Gastrocnemius medialis (tissue), 4 donors: ENCODE measurements at regions of chr20 and their contacts with region 1.

Region 1: DNA sequence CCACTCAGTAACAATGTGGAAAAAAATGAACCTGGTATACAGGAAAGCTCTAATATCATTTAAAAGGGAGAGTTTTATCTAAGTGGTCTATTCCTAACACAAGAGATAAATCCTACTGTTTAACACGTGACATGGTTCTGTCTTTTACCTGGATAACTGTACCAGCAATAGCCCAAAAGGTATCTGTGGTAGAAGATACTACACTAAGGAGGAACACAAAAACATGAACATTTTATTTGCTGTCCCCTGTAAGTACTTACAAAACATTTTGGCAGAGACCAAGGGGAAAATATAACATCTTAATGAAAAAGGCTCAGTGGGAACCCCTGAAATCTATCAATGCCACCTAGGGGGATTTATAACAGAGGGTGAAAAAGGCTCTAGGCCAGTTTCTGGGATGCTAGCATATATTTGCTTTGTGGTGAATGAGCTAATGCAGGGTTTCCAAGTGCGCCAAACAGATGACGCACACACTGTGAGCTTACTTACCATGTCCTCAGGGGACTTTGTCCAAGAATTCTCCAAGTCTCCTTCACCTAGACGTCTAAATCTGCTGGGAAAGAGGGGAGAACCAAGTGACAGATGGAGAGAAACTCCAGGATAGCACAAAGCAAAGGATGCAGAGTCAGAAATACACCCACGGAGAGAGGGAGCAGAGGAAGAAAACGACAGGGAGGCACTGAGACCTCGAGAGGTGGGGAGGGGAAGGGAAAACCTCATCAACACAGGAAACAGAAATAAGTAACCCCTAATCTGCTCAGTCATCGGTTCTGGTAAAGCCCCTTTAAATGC is 147.9 kb upstream of the PRND start:
- DNase-seq: no peak
- ATAC-seq: no peak
- H3K4me3 ChIP-seq: no peak overlapping the region
- H3K27ac ChIP-seq: no peak overlapping the region
- H3K4me1 ChIP-seq: no peaks in the 10 kb centered on the region
- H3K27me3 ChIP-seq: peaks cover 0 to 4% (median 0%) of the 10 kb centered on the region in 3 donors
- CTCF ChIP-seq: no peak
- POLR2A ChIP-seq: no peak

Region 2: DNA sequence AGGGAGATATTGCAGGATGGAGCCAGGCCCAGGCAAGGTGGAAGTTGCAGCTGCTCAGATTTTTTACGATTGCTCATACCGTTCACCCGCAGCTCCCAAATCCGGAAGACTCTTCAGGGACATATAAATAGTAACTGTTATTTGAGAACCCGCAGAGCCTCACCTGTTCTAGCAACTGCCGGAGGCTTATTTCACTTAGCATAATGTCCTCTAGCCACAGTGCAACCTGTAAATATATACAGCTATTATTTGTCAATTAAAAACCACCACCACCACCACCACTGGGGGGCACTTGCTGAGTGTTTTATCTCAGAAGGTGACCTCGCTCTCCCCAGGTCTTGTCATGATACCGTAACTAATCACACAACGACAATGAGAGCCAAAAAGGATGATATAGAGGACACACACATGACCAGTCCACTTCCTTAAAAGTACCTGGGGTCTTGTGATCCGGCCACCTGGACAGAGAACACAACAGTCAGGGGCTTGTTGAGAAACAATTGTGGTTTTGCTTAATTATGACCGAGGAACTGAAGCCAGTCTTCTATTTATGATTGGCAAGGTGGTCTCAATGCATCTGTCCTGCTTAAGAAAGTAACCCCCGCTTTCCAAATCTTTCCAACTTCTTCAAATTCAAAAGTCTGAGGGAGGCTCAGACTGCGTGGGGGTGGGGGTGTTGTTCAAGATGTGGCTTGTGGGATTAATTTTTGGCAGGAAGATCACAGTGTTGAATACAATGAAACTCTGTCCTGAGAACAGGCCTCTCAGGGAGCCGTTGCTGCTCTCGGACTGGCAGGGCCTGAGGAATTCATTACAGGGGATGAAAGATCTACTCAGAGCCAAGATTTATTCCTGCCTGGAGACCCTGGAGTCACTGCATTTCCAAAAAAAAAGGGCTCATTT is 40.2 kb after region 1 on chr20:
- in situ Hi-C with region 1: no loop called
- intact Hi-C with region 1: no loop called
- DNase-seq: peak; percentile 24 to 60
- ATAC-seq: peak; percentile 93 to 97
- H3K4me3 ChIP-seq: no peak overlapping the region
- H3K27ac ChIP-seq: peak overlapping the region; percentile 32 to 72 (median 58)
- H3K4me1 ChIP-seq: peaks cover 6 to 10% of the 10 kb centered on the region in 2 donors
- H3K27me3 ChIP-seq: no peaks in the 10 kb centered on the region
- CTCF ChIP-seq: peak in 3 of 5 experiments; percentile 8 to 36 (median 26)
- POLR2A ChIP-seq: no peak

Region 3: DNA sequence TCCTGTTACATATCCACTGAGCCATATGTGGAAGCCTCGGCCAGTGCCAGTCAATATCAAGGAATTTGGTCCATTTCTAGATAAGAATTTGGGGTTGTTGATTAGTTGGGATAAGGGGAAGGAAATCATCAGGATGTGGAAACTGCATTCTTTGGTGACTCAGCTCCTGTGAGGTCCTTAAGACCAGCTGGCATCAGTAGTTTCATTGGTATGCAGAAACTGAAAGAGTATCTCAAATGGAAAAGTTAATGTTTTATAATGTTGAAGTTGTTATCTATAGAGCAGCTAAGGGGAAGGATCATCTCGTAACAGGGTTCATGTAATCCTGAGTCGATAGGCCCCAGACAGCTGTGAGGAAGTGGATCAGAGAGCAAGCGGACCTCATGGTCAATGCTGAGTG is 60.0 kb after region 1 on chr20:
- in situ Hi-C with region 1: no loop called
- intact Hi-C with region 1: loop called (anchors 10 kb)
- DNase-seq: no peak
- ATAC-seq: no peak
- H3K4me3 ChIP-seq: no peak overlapping the region
- H3K27ac ChIP-seq: no peak overlapping the region
- H3K4me1 ChIP-seq: no peaks in the 10 kb centered on the region
- H3K27me3 ChIP-seq: no peaks in the 10 kb centered on the region
- CTCF ChIP-seq: no peak
- POLR2A ChIP-seq: no peak

Region 4: DNA sequence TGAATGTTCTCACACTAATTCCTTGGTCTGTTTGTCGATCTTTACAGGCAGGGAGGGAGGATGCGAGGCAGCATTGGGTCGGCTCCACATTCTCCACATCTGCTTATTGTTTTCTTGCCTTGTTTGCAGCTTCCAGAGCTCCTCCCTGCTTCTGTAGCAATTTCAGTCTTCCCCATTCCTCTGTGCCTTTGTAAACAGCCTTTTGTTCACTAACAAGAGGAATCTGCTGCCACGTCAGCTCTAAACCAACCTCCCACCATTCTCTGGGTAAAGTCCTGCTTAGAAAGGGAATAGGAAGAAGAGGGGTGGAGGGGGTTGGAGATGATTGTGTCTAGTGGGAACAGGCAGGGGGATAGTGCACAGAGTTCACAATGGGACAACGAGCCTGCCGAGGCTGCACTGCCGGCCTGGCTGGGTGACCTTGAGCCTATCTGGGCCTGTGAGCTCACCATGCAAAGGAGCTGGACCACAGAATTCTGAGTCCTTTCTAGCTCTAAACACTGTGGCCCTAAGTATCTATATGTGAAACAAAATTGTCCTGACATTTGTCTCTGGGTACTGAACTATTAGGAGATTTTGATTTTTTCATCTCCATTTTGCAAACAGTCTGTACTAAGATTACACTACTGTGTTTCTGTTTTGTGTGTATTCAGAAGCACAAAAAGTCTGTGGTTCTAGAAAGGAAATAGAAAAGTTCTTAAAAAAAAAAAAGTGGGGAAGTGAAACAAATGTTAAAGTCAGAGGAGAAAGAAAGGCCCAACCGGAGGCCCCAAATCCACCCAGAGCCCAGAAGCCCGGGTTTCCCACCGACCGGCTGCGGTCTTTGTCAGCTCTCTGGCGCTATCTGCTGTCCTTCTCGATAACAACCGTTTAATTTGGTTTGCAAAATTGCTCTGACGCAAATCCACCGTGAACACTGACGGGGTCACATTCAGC is 146.5 kb after region 1 on chr20:
- in situ Hi-C with region 1: no loop called
- intact Hi-C with region 1: no loop called
- DNase-seq: peak; percentile 45 to 61
- ATAC-seq: peak; percentile 79 to 85
- H3K4me3 ChIP-seq: peak overlapping the region in 1 of 4 donors; percentile 3
- H3K27ac ChIP-seq: peak overlapping the region in 1 of 4 donors; percentile 6
- H3K4me1 ChIP-seq: peaks cover 0 to 7% of the 10 kb centered on the region in 2 donors
- H3K27me3 ChIP-seq: no peaks in the 10 kb centered on the region
- CTCF ChIP-seq: peak; percentile 68 to 77 (median 73)
- POLR2A ChIP-seq: peak in 1 of 2 donors; percentile 11